ENCODE measurements at regions of chr13 and their contacts with region 1.

Region 1: GRCh38 chr13:32310134-32310706 is 4.9 kb downstream of the ZAR1L start:
- DNase-seq: no peak
- ATAC-seq: peak; percentile 82

Region 2: GRCh38 chr13:31909864-31910551 is 400.2 kb before region 1 on chr13:
- intact Hi-C with region 1: loop called (anchors 5 kb)
- DNase-seq: peak; percentile 50
- ATAC-seq: peak; percentile 71

Region 3: DNA sequence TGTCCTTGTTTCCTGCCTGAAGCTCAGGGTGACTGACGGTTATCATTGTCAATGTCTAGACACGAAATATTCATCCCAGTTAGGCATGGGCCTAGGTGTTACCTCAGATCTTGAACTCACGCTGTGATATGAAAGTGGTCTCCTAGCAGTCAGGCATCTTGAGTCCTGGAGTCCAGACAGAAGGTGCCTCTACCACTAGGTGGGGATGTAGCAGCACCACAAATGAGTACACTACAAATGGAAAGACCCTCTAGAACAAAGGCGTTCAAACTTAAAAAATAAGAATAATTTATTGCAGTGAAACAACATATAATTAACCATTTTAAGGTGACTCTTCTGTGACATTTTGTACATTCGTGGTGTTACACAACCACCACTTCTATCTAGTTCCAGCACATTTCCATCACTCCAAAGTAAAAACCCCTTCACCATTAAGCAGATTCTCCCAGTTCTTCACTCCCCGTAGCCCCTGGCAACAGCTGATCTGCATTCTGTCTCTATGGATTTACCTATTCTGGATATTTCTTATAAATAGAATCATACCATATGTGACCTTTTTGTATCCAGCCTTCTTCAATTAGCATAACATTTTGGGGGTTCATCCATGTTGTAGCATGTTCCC is 290.5 kb before region 1 on chr13:
- intact Hi-C with region 1: loop called (anchors 5 kb)
- DNase-seq: no peak
- ATAC-seq: peak; percentile 72

Region 4: DNA sequence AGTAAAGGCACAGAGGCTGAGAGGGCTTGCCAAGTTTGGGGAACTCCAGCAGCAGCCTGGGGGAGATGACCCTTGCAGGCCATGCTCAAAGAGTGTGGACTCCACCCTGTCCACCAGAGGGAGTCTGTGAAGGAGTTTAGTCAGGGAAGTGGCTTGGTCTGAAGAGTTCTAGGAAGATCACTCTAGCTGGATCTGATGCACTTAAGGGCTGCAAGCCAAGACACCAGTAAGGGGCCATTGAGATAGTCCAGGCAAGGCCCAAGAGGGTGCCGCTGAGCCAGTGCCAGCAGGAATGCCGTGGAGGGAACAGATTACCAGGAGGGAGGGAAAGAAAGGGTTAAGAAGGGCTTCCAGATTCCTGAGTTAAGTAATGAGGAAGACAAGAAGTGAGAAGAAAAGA is 63.8 kb before region 1 on chr13:
- intact Hi-C with region 1: loop called (anchors 5 kb)
- DNase-seq: peak; percentile 50
- ATAC-seq: peak; percentile 90

Measured in Right ventricle myocardium superior (tissue), 1 donor.